B cell (primary cell): ENCODE measurements at regions of chr10 and their contacts with region 1.

Region 1: DNA sequence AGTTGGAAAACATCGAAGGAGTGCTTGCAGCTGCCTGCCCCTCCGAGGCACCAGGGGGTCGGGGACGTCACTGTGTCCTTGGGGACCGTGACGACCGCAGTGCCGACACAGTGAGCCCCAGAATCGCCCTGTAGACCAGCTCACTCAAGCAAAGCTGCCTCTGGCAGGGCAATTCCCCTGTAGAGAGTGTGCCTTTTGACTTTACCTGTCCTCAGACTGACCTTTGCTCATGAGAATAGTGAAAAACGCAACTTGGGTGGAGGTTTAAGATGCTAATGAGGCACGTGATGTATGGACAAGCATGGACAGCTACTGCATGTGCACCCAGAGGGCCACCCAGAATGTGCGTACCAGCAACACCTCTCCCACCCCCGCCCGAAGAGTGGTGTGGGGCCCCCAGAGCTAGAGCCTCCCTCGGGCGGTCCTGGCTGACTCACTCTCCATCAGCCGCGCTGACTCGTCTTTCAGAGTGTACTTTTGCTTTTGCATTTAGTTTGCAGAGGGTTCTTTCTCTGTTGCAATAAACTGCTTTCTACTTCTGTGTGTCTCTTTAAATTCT is 271.8 kb downstream of the ADARB2 start:
- DNase-seq: peak; percentile 57
- ATAC-seq: peak; percentile 80
- H3K4me3 ChIP-seq: peak overlapping the region in 2 of 5 experiments; percentile 11 to 38
- H3K4me3 Mint-ChIP-seq: peak overlapping the region; percentile 71
- H3K27ac ChIP-seq: no peak overlapping the region
- H3K27ac Mint-ChIP-seq: peak overlapping the region; percentile 72
- H3K4me1 ChIP-seq: peaks cover 25 to 37% of the 10 kb centered on the region in 2 donors
- H3K4me1 Mint-ChIP-seq: peaks cover 48% of the 10 kb centered on the region
- H3K27me3 ChIP-seq: peaks cover 0 to 5% (median 0%) of the 10 kb centered on the region in 4 experiments
- H3K27me3 Mint-ChIP-seq: peaks cover 21% of the 10 kb centered on the region
- CTCF ChIP-seq: no peak

Region 2: DNA sequence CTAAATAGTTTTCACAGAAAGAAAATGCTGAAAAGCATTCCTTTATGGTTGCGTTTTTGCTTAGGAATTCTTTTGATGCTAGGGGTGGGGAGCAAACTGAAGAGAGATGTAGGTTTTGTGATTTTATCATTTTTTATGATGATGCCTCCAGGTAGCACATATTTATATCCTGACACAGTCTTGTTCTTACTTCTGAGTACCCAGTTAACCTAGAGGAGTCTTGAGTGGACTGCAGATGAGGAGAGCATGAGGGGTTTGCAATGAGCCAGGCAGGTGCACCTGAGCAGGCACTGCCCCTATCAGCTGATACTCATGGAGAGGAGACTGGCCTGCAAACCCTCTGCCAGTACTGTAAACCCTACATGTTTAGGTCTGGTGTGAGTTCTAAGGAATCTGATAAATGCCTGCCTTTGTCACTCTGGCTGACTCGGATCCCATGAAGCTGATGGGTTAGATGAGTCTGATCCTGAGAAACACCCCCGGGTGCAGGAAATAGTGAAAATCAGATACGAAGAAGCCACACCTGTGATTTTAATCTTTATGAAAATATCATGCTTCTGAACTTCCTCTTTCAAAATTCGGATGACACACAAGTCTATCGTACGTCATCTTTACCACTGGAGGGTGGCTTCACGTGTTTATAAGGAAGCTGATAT is 106.4 kb before region 1 on chr10:
- CTCF ChIA-PET with region 1: no interaction called
- POLR2A ChIA-PET with region 1: no interaction called
- intact Hi-C with region 1: loop called (anchors 1 kb)
- DNase-seq: peak; percentile 77
- ATAC-seq: peak; percentile 80
- H3K4me3 ChIP-seq: no peak overlapping the region
- H3K4me3 Mint-ChIP-seq: peak overlapping the region; percentile 61
- H3K27ac ChIP-seq: peak overlapping the region in 1 of 2 donors; percentile 43
- H3K27ac Mint-ChIP-seq: peak overlapping the region; percentile 22
- H3K4me1 ChIP-seq: peaks cover 15 to 19% of the 10 kb centered on the region in 2 donors
- H3K4me1 Mint-ChIP-seq: peaks cover 25% of the 10 kb centered on the region
- H3K27me3 ChIP-seq: peaks cover 0 to 40% (median 1%) of the 10 kb centered on the region in 4 experiments
- H3K27me3 Mint-ChIP-seq: peaks cover 25% of the 10 kb centered on the region
- CTCF ChIP-seq: no peak

Region 3: DNA sequence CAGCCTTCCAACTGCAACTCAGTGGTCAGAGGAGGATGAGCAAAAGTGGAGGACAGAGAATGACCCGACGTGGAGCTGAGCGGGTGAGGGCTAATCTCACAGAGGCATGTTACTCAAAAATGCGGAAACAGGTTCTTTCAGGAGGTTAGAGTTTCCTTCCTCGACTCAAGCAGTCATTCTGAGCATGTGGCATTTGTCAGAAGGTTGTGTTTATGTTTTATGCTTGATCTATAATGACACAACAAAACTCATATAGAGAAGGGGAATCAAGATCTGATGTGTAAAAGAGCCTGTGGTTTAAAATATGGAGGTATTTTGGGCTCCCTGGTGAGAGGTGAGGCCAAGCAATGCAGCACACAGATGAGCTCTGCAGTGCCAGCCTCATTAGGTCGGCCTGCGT is 39.6 kb before region 1 on chr10:
- CTCF ChIA-PET with region 1: interaction called, 4 read pairs
- POLR2A ChIA-PET with region 1: interaction called, 3 read pairs
- intact Hi-C with region 1: loop called (anchors 5 kb)
- DNase-seq: peak; percentile 63
- ATAC-seq: peak; percentile 56
- H3K4me3 ChIP-seq: no peak overlapping the region
- H3K4me3 Mint-ChIP-seq: peak overlapping the region; percentile 77
- H3K27ac ChIP-seq: peak overlapping the region; percentile 36 to 65
- H3K27ac Mint-ChIP-seq: peak overlapping the region; percentile 89
- H3K4me1 ChIP-seq: peaks cover 51 to 69% of the 10 kb centered on the region in 2 donors
- H3K4me1 Mint-ChIP-seq: peaks cover 61% of the 10 kb centered on the region
- H3K27me3 ChIP-seq: no peaks in the 10 kb centered on the region
- H3K27me3 Mint-ChIP-seq: no peaks in the 10 kb centered on the region
- CTCF ChIP-seq: no peak